Left ventricle myocardium superior (tissue), 1 donor: ENCODE measurements at regions of chr4 and their contacts with region 1.

Region 1: GRCh38 chr4:54322818-54323417 is 93.8 kb downstream of the PDGFRA start:
- DNase-seq: peak; percentile 47
- ATAC-seq: peak; percentile 77

Region 2: DNA sequence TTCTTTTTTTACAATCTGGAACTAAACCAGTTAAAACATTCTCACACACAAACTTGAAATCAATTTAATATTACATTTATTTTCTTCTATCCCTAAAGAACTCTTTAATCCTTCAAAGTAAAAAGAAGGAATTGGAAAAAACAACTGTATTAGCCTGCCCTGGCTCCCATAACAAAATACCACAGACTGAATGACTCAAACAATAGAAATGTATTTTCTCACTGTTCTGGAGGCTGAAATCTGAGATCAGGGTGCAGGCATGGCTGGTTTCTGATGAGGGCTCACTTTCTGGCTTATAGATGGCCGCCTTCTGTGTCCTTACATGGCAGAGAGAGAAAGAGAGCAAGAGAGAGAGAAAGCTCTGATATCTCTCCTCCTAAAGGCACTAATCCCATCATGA is 55.5 kb after region 1 on chr4:
- intact Hi-C with region 1: no loop called
- DNase-seq: no peak
- ATAC-seq: no peak

Region 3: GRCh38 chr4:54440394-54441136 is 117.6 kb after region 1 on chr4:
- intact Hi-C with region 1: loop called (anchors 10 kb)
- DNase-seq: no peak
- ATAC-seq: peak; percentile 53

Region 4: GRCh38 chr4:54487491-54487890 is 164.6 kb after region 1 on chr4:
- intact Hi-C with region 1: no loop called
- DNase-seq: no peak
- ATAC-seq: no peak

Region 5: DNA sequence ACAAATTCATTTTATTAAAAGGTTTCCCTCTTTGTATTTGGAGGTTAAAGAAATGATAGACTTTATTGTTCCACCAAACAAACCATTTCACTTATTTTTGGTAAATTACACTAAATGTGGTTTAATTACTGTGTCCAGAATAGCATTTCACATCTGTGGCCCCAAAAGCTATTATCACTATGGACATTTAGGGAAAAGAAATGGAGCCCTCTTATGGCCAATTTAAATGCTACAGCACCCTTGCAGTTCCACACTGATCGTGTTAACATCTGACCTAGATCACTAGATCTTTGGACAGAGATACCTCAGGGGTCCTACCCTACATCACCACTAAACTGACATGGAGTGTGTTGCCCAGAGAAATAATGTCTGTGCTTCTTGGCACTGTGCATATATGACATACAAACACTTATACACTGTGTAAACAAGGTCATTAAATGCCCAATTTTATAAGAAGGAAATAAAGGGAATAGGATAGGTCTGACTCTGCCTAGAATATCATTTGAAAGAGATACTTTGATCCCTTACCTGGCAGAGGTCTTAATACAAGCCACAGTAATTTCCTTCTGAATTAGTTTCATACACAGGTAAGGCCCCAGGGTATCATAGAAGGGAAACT is 638.5 kb after region 1 on chr4:
- intact Hi-C with region 1: loop called (anchors 5 kb)
- DNase-seq: no peak
- ATAC-seq: peak; percentile 53